OCI-LY7 (cell line): ENCODE measurements at regions of chr11 and their contacts with region 1.

Region 1: GRCh38 chr11:15923183-15923582 is 433.2 kb downstream of the SOX6 start:
- DNase-seq: no peak
- H3K4me3 ChIP-seq: no peak overlapping the region
- H3K27ac ChIP-seq: no peak overlapping the region
- H3K4me1 ChIP-seq: no peaks in the 10 kb centered on the region
- CTCF ChIP-seq: no peak

Region 2: DNA sequence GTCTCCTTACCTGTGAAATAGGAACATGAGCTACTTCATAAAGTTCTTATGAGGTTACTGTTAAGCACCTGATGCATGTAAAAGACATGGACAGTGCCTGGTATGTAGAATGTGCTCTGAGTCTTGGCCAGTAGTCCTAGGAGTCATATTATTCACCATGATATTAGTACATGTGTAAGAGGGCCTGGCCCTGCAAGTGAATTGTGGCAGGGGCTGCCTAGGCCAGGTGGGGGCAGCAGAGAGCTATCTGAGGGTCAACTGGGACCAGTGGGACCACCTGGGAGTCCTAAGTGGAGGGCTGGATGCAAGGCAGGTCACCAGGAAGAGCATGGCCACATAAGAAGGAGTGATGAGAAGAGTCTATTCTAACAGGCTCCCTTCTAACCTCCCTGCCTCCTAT is 96.4 kb before region 1 on chr11:
- CTCF ChIA-PET with region 1: no interaction called
- POLR2A ChIA-PET with region 1: no interaction called
- intact Hi-C with region 1: no loop called
- DNase-seq: peak; percentile 32
- H3K4me3 ChIP-seq: no peak overlapping the region
- H3K27ac ChIP-seq: no peak overlapping the region
- H3K4me1 ChIP-seq: peaks cover 9% of the 10 kb centered on the region
- CTCF ChIP-seq: peak; percentile 79

Region 3: DNA sequence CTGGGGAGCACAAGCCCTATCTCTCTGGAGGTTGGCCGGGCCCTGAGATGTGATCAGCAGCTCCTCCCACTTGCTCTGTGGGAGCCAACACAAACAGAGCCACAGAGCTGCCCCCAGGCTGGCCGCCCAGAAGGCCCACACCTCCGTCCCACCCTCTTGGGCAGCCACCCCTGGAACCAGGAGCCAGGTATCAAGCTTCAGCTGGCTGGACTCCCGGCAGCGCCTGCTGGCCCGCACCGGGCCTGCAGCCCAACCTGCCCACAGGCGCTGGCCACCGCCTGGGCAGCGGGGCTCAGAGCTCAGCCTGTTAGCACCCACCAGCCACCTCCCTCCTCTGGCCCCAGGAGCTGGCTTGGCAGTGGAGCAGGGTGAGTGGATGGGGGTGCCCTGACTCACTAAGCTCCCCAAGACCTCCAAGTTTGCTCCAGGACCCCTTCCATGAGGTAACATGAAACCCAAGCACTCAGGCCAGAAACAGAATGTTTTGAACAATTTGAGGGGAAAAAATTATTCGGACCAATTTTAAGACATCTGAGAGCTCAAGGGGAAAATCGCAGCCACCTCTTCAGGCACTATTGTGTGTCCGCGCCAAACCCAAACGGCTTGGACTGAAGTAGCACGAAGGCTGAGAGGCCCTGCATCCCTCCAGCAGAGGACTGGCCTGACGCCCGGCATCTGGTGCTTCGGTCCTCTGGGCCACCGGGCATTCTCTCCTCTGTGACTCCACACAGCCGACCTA is 17.6 kb before region 1 on chr11:
- CTCF ChIA-PET with region 1: no interaction called
- POLR2A ChIA-PET with region 1: no interaction called
- intact Hi-C with region 1: no loop called
- DNase-seq: no peak
- H3K4me3 ChIP-seq: no peak overlapping the region
- H3K27ac ChIP-seq: no peak overlapping the region
- H3K4me1 ChIP-seq: no peaks in the 10 kb centered on the region
- CTCF ChIP-seq: no peak

Region 4: DNA sequence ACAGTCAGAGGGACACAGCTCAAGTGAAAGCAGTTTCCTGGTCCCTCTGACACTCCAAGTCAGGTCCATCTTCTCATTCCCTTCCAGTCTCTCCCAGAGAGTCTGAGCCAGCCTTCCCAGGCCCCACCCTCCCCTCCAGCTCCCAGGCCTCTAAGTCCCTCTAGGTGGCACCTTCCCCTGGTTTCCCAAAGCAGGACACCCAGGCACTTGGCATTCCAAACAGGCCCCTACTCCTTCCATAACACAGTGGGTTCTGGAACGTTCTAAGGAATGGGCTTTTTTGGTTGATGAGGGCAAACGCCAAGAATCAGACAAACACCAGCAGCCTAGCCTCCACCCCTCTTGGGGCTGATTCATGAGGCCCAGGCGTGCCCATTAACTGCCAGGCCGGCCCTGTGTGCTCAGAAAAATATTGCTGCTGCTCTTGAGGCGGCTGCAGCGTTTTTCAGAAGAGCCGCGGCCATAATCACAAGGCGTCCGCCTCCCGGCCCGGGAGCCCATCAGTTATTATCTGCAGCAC is 14.5 kb after region 1 on chr11:
- CTCF ChIA-PET with region 1: interaction called, 7 read pairs
- POLR2A ChIA-PET with region 1: interaction called, 10 read pairs
- intact Hi-C with region 1: no loop called
- DNase-seq: no peak
- H3K4me3 ChIP-seq: no peak overlapping the region
- H3K27ac ChIP-seq: no peak overlapping the region
- H3K4me1 ChIP-seq: no peaks in the 10 kb centered on the region
- CTCF ChIP-seq: no peak